Mammary epithelial cell (primary cell): ENCODE measurements at regions of chr14 and their contacts with region 1.

Region 1: GRCh38 chr14:47207617-47208016 is 467.8 kb downstream of the MDGA2 start:
- DNase-seq: no peak
- H3K4me3 ChIP-seq: no peak overlapping the region
- H3K27ac ChIP-seq: no peak overlapping the region
- H3K4me1 ChIP-seq: no peaks in the 10 kb centered on the region
- H3K27me3 ChIP-seq: no peaks in the 10 kb centered on the region
- CTCF ChIP-seq: no peak

Region 2: DNA sequence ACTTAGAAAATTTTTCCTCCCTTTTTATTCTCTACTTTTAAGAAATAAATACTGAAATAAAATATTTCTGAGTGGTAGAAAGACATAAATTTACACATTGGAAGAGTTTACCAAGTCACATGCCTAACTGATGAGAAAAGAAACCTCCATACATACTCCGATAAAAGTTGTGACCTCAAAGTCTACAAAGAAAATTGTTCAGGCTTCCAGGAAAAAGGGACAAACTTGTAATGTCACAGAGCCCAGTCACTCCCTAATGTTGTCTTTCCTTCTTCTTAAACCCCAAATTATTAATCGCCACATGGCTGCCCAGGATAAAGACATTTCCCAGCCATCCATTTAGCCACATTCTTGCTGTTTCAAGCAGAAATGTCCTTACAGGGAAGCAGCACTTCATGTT is 12.5 kb after region 1 on chr14:
- CTCF ChIA-PET with region 1: no interaction called
- dilution Hi-C with region 1: no loop called
- in situ Hi-C with region 1: no loop called
- intact Hi-C with region 1: loop called (anchors 1 kb)
- DNase-seq: no peak
- H3K4me3 ChIP-seq: no peak overlapping the region
- H3K27ac ChIP-seq: no peak overlapping the region
- H3K4me1 ChIP-seq: no peaks in the 10 kb centered on the region
- H3K27me3 ChIP-seq: no peaks in the 10 kb centered on the region
- CTCF ChIP-seq: no peak